Right ventricle myocardium inferior (tissue), 1 donor: ENCODE measurements at regions of chr17 and their contacts with region 1.

Region 1: GRCh38 chr17:8248751-8249607 is at the start of gene PFAS:
- DNase-seq: peak; percentile 99
- ATAC-seq: peak; percentile 81
- total RNA-seq, gene PFAS: 14.7 TPM

Region 2: DNA sequence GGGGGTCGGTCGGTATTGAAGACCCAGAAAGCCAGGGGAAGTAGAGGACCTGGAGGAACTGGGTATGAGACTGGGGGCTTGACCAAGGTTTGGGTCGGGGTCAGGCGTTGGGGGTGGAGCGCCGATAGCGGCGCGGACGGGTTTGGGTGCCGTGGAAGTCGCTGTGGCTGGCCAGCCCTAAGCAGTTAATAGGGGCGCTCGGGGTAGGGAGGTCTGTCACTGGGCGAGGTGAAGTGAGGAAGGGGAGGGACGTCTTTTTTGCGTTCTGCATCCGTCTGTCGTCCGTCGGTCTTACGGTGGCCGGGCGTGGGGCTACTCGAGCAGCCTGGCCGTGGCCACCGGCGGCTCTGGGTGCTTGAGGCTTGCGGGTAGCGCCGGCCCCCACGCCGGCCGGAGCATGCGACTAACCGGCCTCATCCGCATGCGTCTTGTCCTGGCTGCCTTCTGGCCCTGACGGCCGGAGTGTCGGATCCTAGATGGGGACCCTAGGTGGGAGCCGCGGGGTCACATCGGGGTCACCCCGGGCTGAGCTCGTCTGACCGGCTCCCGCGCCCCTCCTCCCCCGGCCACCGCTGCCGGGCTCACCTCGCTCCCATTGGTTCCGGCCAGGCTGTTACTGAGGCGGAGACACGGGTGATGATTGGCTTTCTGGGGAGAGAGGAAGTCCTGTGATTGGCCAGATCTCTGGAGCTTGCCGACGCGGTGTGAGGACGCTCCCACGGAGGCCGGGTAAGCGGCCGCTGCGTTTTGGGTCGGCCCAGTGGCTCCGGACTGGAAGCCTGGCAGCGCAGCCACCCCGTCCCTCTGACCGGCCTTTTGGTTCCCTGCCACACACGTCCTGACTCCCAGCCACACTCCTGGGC is 404.5 kb before region 1 on chr17:
- intact Hi-C with region 1: loop called (anchors 5 kb)
- DNase-seq: peak; percentile 96
- ATAC-seq: peak; percentile 82

Region 3: DNA sequence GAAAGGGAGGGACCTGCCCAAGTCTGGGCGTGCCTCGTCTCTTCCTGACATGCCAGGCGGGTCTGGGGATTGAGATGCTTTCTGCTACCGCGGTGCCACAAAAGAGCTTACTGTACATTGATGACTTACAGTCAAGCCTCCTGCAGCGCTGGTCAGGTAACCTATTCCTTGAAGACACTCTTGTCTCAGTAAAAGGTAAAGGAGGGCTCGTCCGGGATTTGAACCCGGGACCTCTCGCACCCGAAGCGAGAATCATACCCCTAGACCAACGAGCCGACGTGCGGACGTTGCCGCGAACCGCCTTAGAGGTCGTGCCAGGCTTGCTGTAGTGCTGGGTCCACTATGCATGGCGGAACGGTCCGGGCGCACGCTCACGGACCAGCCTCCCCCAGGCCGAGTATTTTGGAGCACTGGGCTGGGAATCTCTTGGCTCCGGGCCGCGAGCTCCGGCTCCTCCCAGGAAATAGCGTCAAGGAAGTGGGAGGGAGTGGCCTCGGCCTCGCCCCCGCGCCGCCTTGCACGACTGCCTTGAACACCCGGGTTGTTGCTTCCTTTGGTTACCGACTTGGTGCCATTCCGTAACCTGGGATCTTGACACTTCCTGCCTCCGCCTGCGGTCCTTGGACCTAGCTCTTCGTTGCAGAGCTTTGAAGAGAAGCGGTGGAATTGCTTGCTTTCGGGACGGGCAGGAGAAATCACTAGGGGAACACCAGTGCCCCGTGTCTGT is 26.2 kb before region 1 on chr17:
- intact Hi-C with region 1: loop called (anchors 1 kb)
- DNase-seq: peak; percentile 97
- ATAC-seq: peak; percentile 75

Region 4: DNA sequence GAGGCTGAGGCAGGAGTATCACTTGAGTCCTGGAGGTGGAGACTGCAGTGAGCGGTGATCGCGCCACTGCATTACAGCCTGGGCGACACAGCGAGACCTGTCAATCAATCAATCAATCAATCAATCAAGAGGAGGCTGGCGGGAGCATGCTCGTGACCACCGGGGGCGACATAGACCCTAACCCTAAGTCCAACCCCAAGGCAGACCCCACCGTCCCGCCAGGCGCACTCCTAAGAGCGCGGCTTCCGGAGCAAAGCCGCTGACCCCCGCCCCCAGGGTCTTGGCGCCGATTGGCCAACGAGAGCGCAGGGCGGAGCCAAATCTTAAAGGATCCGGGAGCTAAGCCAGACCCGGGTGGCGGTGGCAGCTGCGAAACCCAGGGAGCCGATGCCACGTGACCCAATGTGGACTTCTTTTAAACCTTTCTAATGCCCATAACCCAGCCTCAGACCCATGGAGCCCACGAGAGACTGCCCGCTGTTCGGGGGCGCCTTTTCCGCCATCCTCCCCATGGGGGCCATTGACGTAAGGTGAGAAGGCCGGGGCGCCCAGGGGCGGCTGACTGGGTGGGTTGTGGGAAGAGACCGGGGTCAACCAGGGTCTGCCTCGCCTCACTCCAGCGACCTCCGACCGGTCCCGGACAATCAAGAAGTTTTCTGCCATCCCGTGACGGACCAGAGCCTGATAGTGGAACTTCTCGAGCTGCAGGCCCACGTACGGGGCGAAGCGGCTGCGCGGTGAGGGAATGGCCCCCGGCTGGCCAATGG is 39.5 kb after region 1 on chr17 and contains the start of gene RANGRF:
- intact Hi-C with region 1: loop called (anchors 2 kb)
- DNase-seq: peak; percentile 95
- ATAC-seq: peak; percentile 92
- total RNA-seq, gene RANGRF: 25.7 TPM